Heart left ventricle (tissue), 16 donors: ENCODE measurements at regions of chr7 and their contacts with region 1.

Region 1: GRCh38 chr7:25098096-25099046 is 26.7 kb downstream of the CYCS start:
- DNase-seq: peak in 4 of 5 donors; percentile 27 to 52 (median 40)
- ATAC-seq: peak in 3 of 4 donors; percentile 59 to 78 (median 63)
- H3K4me3 ChIP-seq: no peak overlapping the region
- H3K27ac ChIP-seq: no peak overlapping the region
- H3K4me1 ChIP-seq: peaks cover 0 to 3% (median 0%) of the 10 kb centered on the region in 12 donors
- H3K27me3 ChIP-seq: no peaks in the 10 kb centered on the region
- CTCF ChIP-seq: peak; percentile 74 to 92 (median 82)
- POLR2A ChIP-seq: no peak

Region 2: GRCh38 chr7:24917510-24918239 is 180.7 kb before region 1 on chr7:
- intact Hi-C with region 1: no loop called
- DNase-seq: no peak
- ATAC-seq: no peak
- H3K4me3 ChIP-seq: no peak overlapping the region
- H3K27ac ChIP-seq: no peak overlapping the region
- H3K4me1 ChIP-seq: peaks cover 0 to 35% (median 8%) of the 10 kb centered on the region in 12 donors
- H3K27me3 ChIP-seq: no peaks in the 10 kb centered on the region
- CTCF ChIP-seq: no peak
- POLR2A ChIP-seq: no peak

Region 3: GRCh38 chr7:25158966-25159365 is 60.6 kb after region 1 on chr7:
- intact Hi-C with region 1: loop called in 1 of 10 experiments (anchors 2 kb)
- DNase-seq: no peak
- ATAC-seq: no peak
- H3K4me3 ChIP-seq: no peak overlapping the region
- H3K27ac ChIP-seq: no peak overlapping the region
- H3K4me1 ChIP-seq: no peaks in the 10 kb centered on the region
- H3K27me3 ChIP-seq: no peaks in the 10 kb centered on the region
- CTCF ChIP-seq: no peak
- POLR2A ChIP-seq: no peak

Region 4: GRCh38 chr7:25333296-25333928 is 235.0 kb after region 1 on chr7:
- intact Hi-C with region 1: no loop called
- DNase-seq: no peak
- ATAC-seq: no peak
- H3K4me3 ChIP-seq: no peak overlapping the region
- H3K27ac ChIP-seq: no peak overlapping the region
- H3K4me1 ChIP-seq: no peaks in the 10 kb centered on the region
- H3K27me3 ChIP-seq: no peaks in the 10 kb centered on the region
- CTCF ChIP-seq: no peak
- POLR2A ChIP-seq: no peak